K562 (cell line): ENCODE measurements at regions of chr16 and their contacts with region 1.

Region 1: GRCh38 chr16:30997000-30997886 is 12.2 kb downstream of the HSD3B7 start:
- DNase-seq: peak; percentile 89 to 99 (median 98)
- ATAC-seq: peak; percentile 93
- H3K4me3 ChIP-seq: peak overlapping the region; percentile 69
- H3K27ac ChIP-seq: peak overlapping the region; percentile 91
- H3K4me1 ChIP-seq: peaks cover 48 to 50% of the 10 kb centered on the region in 2 experiments
- H3K27me3 ChIP-seq: no peaks in the 10 kb centered on the region
- CTCF ChIP-seq: no peak
- EP300 ChIP-seq: no peak
- POLR2A ChIP-seq: peak; percentile 90
- RAD21 ChIP-seq: no peak

Region 2: GRCh38 chr16:31032736-31033708 is 35.8 kb after region 1 on chr16 and contains the start of gene STX4:
- CTCF ChIA-PET with region 1: no interaction called
- POLR2A ChIA-PET with region 1: interaction called, 4 read pairs
- in situ Hi-C with region 1: no loop called
- intact Hi-C with region 1: loop called (anchors 5 kb)
- DNase-seq: peak; percentile 91 to 99 (median 96)
- ATAC-seq: peak; percentile 88
- H3K4me3 ChIP-seq: peak within 1 kb of the TSS; percentile 98
- H3K27ac ChIP-seq: peak within 1 kb of the TSS; percentile 91
- H3K4me1 ChIP-seq: peaks cover 16 to 20% of the 10 kb centered on the region in 2 experiments
- H3K27me3 ChIP-seq: no peaks in the 10 kb centered on the region
- CTCF ChIP-seq: no peak; a peak in 1 of 6 replicates
- EP300 ChIP-seq: peak; percentile 81
- POLR2A ChIP-seq: peak; percentile 68
- RAD21 ChIP-seq: 0 out of 4 replicates have a peak, but pooled peaks of 1 of the 2 experiments have one; percentile 2
- polyA plus RNA-seq, gene STX4: 3.2 to 7.4 TPM

Region 3: DNA sequence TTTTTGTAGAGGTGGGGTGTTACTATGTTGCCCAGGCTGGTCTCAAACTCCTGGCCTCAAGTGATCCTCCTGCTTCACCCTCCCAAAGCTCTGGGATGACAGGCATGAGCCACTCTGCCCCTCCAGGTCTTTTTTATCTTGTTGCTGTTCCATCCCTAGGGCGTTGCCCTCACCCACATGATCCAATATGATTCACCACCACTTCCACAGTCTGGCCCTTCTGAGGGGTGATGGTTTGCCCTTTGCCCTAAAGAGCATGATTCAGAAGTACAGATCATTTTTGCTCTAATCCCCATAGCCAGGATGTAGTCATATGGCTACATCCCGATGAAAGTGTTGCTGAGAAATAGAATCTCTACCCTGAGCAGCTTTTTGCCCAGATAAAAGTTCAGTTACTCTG is 54.9 kb after region 1 on chr16:
- CTCF ChIA-PET with region 1: no interaction called
- POLR2A ChIA-PET with region 1: no interaction called
- in situ Hi-C with region 1: no loop called
- intact Hi-C with region 1: no loop called
- DNase-seq: peak; percentile 28 to 57 (median 35)
- ATAC-seq: peak; percentile 38
- H3K4me3 ChIP-seq: no peak overlapping the region
- H3K27ac ChIP-seq: no peak overlapping the region
- H3K4me1 ChIP-seq: peaks cover 0 to 3% of the 10 kb centered on the region in 2 experiments; a peak in 2 of 5 replicates
- H3K27me3 ChIP-seq: peaks cover 3 to 8% of the 10 kb centered on the region in 2 experiments; a peak in 3 of 5 replicates
- CTCF ChIP-seq: no peak
- EP300 ChIP-seq: 0 out of 2 replicates have a peak, but pooled peaks have one; percentile 20
- POLR2A ChIP-seq: no peak
- RAD21 ChIP-seq: no peak

Region 4: GRCh38 chr16:31323959-31324629 is 326.9 kb after region 1 on chr16:
- CTCF ChIA-PET with region 1: no interaction called
- POLR2A ChIA-PET with region 1: no interaction called
- in situ Hi-C with region 1: loop called (anchors 10 kb)
- intact Hi-C with region 1: no loop called
- DNase-seq: no peak
- ATAC-seq: no peak
- H3K4me3 ChIP-seq: no peak overlapping the region
- H3K27ac ChIP-seq: no peak overlapping the region
- H3K4me1 ChIP-seq: peaks cover 0 to 11% of the 10 kb centered on the region in 2 experiments; a peak in 4 of 5 replicates
- H3K27me3 ChIP-seq: peaks cover 2 to 19% of the 10 kb centered on the region in 2 experiments; a peak in 3 of 5 replicates
- CTCF ChIP-seq: no peak
- EP300 ChIP-seq: no peak
- POLR2A ChIP-seq: no peak
- RAD21 ChIP-seq: no peak